GM23248 (cell line): ENCODE measurements at regions of chr11 and their contacts with region 1.

Region 1: GRCh38 chr11:61899146-61899841 is 7.9 kb upstream of the FADS3 start:
- DNase-seq: peak; percentile 71
- H3K4me3 ChIP-seq: no peak overlapping the region
- H3K27ac ChIP-seq: no peak overlapping the region
- H3K4me1 ChIP-seq: no peaks in the 10 kb centered on the region
- H3K27me3 ChIP-seq: no peaks in the 10 kb centered on the region

Region 2: DNA sequence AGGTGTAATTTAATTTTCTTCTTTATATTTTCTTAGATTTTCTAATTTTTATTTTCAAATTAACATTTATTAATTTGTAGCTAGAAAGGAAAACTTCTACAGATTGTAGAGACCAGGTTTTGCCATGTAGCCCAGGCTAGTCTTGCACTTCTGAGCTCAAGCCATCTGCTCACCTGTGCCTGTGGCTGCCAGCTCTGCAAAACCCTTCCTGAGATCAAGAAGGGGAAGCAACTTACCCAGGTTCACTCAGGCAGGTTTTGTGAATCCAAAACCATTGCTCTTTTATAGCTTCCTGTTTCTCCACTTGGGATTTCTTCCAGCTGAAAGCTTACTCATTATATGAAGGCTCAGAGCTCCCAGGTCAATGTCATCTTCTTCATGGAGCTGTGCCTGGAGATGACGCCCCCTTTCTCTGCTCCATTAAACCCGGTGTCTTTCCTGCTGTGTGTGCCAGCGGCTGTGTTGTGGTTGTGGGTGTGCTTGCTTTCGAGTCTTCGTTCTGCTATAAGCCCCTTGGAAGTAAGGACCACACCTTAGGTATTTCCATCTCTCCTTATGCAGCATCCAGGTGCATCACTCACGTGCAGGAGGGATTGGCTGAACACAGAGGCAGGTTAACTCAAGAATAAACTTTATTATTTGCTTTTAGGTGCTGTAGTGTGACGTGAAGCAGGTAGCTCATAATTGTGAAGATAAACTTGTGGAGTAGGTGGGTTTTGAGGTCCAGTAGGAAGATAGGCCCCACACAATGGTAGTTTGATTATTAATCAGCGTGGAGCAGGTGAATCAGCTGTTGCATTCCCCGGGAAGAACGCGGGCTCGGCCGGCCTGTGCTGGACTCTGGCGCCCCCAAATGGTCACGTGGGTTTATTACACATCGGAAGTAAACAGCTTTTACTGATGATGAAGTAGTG is 182.3 kb after region 1 on chr11:
- in situ Hi-C with region 1: loop called (anchors 10 kb)
- DNase-seq: peak; percentile 80
- H3K4me3 ChIP-seq: peak overlapping the region; percentile 14; the same call in 1 of the 2 replicates
- H3K27ac ChIP-seq: no peak overlapping the region
- H3K4me1 ChIP-seq: peaks cover 4% of the 10 kb centered on the region; the same call in 1 of the 2 replicates
- H3K27me3 ChIP-seq: no peaks in the 10 kb centered on the region